CD8-positive, alpha-beta T cell (primary cell): ENCODE measurements at regions of chr11 and their contacts with region 1.

Region 1: GRCh38 chr11:1572197-1573076 is at the start of gene DUSP8:
- DNase-seq: peak; percentile 90 to 98 (median 95)
- ATAC-seq: peak; percentile 58
- H3K4me3 ChIP-seq: peak within 1 kb of the TSS; percentile 51 to 63
- H3K4me3 Mint-ChIP-seq: peak within 1 kb of the TSS; percentile 82
- H3K27ac ChIP-seq: peak within 1 kb of the TSS; percentile 59 to 86
- H3K27ac Mint-ChIP-seq: peak within 1 kb of the TSS; percentile 92
- H3K4me1 ChIP-seq: peaks cover 54% of the 10 kb centered on the region
- H3K4me1 Mint-ChIP-seq: peaks cover 37% of the 10 kb centered on the region
- H3K27me3 ChIP-seq: no peaks in the 10 kb centered on the region
- H3K27me3 Mint-ChIP-seq: no peaks in the 10 kb centered on the region
- CTCF ChIP-seq: no peak
- total RNA-seq, gene DUSP8: 123 to 130 TPM

Region 2: DNA sequence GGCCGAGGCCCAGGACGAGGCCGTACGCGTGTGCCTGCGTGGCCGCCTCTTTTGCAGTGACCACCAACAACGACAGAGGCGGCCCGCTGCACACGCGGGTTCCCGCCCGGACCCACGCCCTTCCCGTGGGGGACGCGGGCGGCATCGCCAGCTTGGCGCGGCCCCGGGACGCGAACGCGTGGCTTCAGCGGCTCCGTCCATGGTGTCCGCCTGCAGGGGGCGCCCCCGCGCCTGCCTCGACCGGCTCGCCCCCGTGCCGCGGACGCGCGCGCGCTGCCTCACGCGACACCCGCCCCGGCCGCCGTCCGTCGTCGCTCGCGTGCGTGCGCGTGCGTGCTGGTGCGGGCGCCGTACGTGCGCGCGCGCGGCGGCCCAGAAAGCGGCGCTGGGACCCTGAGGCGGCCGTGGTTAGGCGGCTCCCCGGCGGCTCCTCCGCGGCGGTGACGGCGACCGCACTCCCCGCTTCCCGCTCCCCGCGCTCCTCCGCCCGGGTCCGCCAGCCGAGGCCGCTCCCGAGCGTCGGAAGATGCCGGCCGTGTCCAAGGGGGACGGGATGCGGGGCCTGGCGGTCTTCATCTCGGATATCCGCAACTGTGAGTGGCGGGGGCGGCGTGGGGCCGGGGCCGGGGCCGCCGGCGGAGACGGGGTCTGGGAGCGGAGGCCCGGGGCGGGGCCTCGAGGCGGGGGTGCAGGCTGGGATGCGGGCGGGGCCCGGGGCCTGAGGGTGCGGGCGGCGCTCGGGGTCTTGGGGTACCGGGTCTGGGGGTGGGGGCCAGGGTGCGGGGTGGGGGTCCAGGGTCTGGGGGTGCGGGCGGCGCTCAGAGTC is 646.7 kb before region 1 on chr11 and contains the start of gene AP2A2:
- CTCF ChIA-PET with region 1: no interaction called
- POLR2A ChIA-PET with region 1: no interaction called
- intact Hi-C with region 1: loop called in 1 of 2 experiments (anchors 5 kb)
- DNase-seq: peak; percentile 76 to 96 (median 92)
- ATAC-seq: peak; percentile 72
- H3K4me3 ChIP-seq: peak within 1 kb of the TSS; percentile 48 to 70
- H3K4me3 Mint-ChIP-seq: peak within 1 kb of the TSS; percentile 82
- H3K27ac ChIP-seq: peak within 1 kb of the TSS; percentile 37 to 67
- H3K27ac Mint-ChIP-seq: peak within 1 kb of the TSS; percentile 88
- H3K4me1 ChIP-seq: peaks cover 41% of the 10 kb centered on the region
- H3K4me1 Mint-ChIP-seq: peaks cover 32% of the 10 kb centered on the region
- H3K27me3 ChIP-seq: no peaks in the 10 kb centered on the region
- H3K27me3 Mint-ChIP-seq: no peaks in the 10 kb centered on the region
- CTCF ChIP-seq: peak; percentile 67
- total RNA-seq, gene AP2A2: 38.6 to 44.3 TPM

Region 3: DNA sequence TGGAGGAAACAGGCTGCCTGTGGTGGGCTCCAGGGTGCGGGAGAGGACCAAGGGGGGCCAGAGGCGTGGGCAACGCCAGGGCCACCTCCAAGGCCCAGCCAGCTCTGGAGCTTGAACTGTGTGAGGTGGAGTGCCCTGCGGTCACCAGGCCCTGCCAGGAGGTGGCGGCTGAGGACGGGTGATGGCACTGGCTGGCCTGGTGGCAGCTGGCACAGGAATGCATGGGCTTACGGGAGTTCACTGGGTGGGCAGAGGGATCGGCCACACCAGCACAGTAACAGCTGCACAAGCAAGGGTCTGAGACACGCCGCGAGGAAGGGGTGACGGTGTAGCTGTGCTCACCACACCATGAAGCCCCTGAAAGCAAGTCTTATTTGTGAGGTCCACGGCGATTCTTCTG is 278.8 kb before region 1 on chr11:
- CTCF ChIA-PET with region 1: no interaction called
- POLR2A ChIA-PET with region 1: no interaction called
- intact Hi-C with region 1: loop called in 1 of 2 experiments (anchors 2 kb)
- DNase-seq: peak in 2 of 9 experiments; percentile 30 to 34
- ATAC-seq: peak; percentile 46
- H3K4me3 ChIP-seq: no peak overlapping the region
- H3K4me3 Mint-ChIP-seq: no peak overlapping the region
- H3K27ac ChIP-seq: no peak overlapping the region
- H3K27ac Mint-ChIP-seq: no peak overlapping the region
- H3K4me1 ChIP-seq: no peaks in the 10 kb centered on the region
- H3K4me1 Mint-ChIP-seq: no peaks in the 10 kb centered on the region
- H3K27me3 ChIP-seq: no peaks in the 10 kb centered on the region
- H3K27me3 Mint-ChIP-seq: no peaks in the 10 kb centered on the region
- CTCF ChIP-seq: no peak

Region 4: DNA sequence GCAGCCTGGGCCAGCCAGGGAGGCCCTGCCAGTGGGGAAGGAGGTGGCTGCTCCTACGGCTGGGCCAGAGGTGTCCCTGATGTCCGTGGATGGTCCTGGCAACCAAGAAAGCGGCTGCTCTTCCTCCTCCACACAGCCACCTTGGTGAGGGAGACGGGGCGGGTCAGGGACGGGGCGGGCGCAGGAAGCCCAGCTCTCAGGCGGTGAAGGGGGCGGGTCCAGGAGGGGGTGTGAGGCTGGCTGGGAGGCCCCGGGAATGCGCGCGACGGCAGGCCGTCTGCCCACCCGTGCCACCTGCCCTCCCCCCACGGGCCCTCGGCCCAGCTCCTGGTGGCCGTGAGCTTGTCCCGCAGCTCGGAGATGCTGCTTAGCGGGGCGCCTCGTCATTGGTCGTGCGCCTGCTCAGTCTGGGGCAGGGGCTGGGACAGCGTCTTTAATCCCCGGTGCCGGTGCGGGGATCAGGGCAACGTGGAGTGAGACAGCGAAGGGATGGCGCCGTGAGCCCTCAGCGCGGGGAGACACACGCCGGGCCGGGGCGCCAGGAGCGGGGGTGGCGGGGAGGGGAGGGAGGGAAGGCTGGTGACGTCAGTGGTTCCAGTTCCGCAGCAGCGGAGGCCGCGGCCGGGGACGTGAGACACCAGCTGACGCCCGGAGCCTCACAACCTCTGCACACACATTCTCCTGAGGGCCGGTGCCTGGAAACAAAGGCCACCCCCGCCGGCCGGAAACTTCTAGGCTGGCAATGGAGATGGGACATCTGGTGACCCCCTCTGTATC is 189.4 kb before region 1 on chr11:
- CTCF ChIA-PET with region 1: interaction called, 3 read pairs
- POLR2A ChIA-PET with region 1: no interaction called
- intact Hi-C with region 1: loop called (anchors 5 kb)
- DNase-seq: peak; percentile 59 to 91 (median 78)
- ATAC-seq: peak; percentile 79
- H3K4me3 ChIP-seq: peak overlapping the region; percentile 67 to 83
- H3K4me3 Mint-ChIP-seq: peak overlapping the region; percentile 75
- H3K27ac ChIP-seq: peak overlapping the region; percentile 70 to 94
- H3K27ac Mint-ChIP-seq: peak overlapping the region; percentile 57
- H3K4me1 ChIP-seq: peaks cover 4% of the 10 kb centered on the region
- H3K4me1 Mint-ChIP-seq: peaks cover 8% of the 10 kb centered on the region
- H3K27me3 ChIP-seq: no peaks in the 10 kb centered on the region
- H3K27me3 Mint-ChIP-seq: no peaks in the 10 kb centered on the region
- CTCF ChIP-seq: no peak

Region 5: DNA sequence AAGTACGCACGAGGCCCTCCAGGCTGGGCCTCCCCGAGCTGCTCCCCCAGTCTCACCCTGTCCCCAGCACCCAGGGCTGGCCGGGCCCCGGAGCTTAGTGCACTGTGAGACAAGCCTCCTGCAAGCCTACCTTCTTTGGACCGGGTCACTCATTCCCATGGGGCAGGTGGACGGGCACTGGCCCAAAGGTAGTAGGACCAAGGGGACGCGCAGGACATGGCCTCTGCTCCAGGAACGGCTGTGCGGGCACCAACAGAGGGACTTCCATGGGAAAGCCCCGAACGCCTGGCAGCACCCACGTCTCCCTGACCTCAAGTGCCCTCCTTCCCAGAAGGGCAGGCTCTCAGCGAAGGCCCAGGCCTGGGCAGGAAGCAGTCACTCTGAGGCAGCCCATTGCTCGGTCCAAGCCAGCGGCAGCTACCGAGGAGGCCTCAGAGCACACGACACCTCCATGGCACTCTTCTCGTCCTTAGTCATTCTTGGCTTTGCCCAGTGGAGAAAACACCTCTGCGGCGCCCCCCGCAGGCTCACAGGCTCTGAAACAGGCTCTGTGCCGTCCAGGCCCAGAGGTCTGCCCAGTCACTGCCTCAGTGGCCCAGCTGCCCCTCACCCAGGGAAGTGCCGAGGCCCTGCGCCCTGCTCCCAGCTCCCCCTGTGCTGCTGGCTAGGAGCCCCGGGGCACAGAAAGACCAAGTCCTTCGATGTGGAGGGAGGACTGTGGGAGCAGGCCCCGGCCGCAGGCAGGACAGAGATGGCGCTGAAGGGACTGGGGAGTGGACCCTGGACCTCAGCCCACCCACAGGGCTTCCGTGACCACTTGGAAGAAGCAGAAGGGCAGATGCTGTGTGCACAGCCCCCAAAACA is 89.6 kb before region 1 on chr11:
- CTCF ChIA-PET with region 1: no interaction called
- POLR2A ChIA-PET with region 1: no interaction called
- intact Hi-C with region 1: no loop called
- DNase-seq: no peak
- ATAC-seq: no peak
- H3K4me3 ChIP-seq: no peak overlapping the region
- H3K4me3 Mint-ChIP-seq: no peak overlapping the region
- H3K27ac ChIP-seq: no peak overlapping the region
- H3K27ac Mint-ChIP-seq: no peak overlapping the region
- H3K4me1 ChIP-seq: peaks cover 23% of the 10 kb centered on the region
- H3K4me1 Mint-ChIP-seq: peaks cover 24% of the 10 kb centered on the region
- H3K27me3 ChIP-seq: no peaks in the 10 kb centered on the region
- H3K27me3 Mint-ChIP-seq: no peaks in the 10 kb centered on the region
- CTCF ChIP-seq: no peak

Region 6: DNA sequence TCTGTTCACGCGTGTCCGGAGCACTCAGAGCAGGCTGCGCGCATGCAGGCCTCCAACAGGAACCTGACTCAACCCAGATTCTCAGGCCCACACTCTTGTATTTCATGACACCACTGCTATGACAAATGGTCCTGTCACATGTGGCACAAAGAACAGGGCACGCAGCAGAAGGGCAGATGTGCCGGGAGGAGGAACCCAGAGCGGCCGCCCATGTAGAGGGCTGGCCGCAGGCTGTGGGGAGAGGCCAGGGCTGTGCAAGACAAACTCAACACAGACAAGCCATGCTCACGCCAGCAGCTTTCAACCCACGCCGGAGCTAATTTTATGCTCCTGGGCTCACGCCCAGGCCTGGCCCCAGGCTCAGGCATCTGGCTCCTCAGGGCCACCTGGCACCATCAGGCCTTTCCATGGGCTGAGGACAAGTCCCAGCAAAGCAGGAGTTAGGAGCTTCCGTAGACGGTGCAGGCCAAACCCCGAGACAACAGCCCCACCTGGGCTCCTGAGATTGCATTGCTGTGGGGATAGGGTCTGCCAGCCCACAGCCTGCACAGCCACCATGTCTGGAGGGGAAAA is 40.3 kb before region 1 on chr11:
- CTCF ChIA-PET with region 1: interaction called, 11 read pairs
- POLR2A ChIA-PET with region 1: no interaction called
- intact Hi-C with region 1: loop called in 1 of 2 experiments (anchors 5 kb)
- DNase-seq: no peak
- ATAC-seq: no peak
- H3K4me3 ChIP-seq: no peak overlapping the region
- H3K4me3 Mint-ChIP-seq: no peak overlapping the region
- H3K27ac ChIP-seq: no peak overlapping the region
- H3K27ac Mint-ChIP-seq: no peak overlapping the region
- H3K4me1 ChIP-seq: peaks cover 14% of the 10 kb centered on the region
- H3K4me1 Mint-ChIP-seq: peaks cover 51% of the 10 kb centered on the region
- H3K27me3 ChIP-seq: no peaks in the 10 kb centered on the region
- H3K27me3 Mint-ChIP-seq: no peaks in the 10 kb centered on the region
- CTCF ChIP-seq: no peak

Region 7: DNA sequence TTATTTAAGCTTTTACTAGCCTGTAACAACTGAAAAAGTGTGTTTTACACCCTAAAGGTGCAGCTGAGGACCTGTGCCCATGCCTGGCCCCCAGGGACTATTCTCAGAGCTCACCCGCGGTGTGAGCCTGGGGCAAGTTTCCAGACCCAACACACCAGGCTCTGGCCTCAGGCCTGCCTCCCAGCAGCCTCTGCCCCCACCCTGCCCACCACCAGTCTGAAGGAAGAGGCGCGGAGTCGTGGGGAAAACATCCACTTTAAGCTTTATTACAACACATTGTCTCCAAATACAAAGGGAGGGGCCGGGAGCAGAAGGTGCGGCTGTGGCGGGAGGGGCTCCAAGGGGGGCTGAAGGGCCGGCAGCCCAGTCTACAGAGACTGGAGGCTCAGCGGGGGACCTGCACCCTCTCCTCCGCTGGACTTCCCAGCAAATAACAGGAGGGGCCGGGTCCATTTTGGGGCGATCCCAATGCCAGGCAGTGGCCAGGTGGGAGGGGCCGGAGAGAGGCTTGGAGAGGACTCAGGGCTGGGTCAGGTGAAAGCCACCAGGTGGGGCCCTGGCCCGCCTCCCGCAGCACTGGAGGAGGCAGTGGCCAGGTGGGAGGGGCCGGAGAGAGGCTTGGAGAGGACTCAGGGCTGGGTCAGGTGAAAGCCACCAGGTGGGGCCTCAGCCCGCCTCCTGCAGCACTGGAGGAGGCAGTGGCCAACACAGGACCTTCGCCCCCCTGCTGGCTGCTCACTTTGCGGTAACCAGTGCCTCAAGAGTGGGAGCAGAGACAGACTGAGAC is 18.4 kb before region 1 on chr11:
- CTCF ChIA-PET with region 1: interaction called, 170 read pairs
- POLR2A ChIA-PET with region 1: interaction called, 4 read pairs
- intact Hi-C with region 1: no loop called
- DNase-seq: peak in 2 of 9 experiments; percentile 6 to 23
- ATAC-seq: no peak
- H3K4me3 ChIP-seq: no peak overlapping the region
- H3K4me3 Mint-ChIP-seq: no peak overlapping the region
- H3K27ac ChIP-seq: no peak overlapping the region
- H3K27ac Mint-ChIP-seq: no peak overlapping the region
- H3K4me1 ChIP-seq: no peaks in the 10 kb centered on the region
- H3K4me1 Mint-ChIP-seq: no peaks in the 10 kb centered on the region
- H3K27me3 ChIP-seq: peaks cover 0 to 2% of the 10 kb centered on the region in 2 experiments
- H3K27me3 Mint-ChIP-seq: peaks cover 22% of the 10 kb centered on the region
- CTCF ChIP-seq: no peak

Region 8: GRCh38 chr11:1628506-1629325 is 56.3 kb after region 1 on chr11:
- CTCF ChIA-PET with region 1: interaction called, 13 read pairs
- POLR2A ChIA-PET with region 1: no interaction called
- intact Hi-C with region 1: no loop called
- DNase-seq: peak; percentile 27 to 75 (median 62)
- ATAC-seq: peak; percentile 93
- H3K4me3 ChIP-seq: no peak overlapping the region
- H3K4me3 Mint-ChIP-seq: no peak overlapping the region
- H3K27ac ChIP-seq: no peak overlapping the region
- H3K27ac Mint-ChIP-seq: no peak overlapping the region
- H3K4me1 ChIP-seq: peaks cover 12% of the 10 kb centered on the region
- H3K4me1 Mint-ChIP-seq: peaks cover 6% of the 10 kb centered on the region
- H3K27me3 ChIP-seq: peaks cover 6 to 10% of the 10 kb centered on the region in 2 experiments
- H3K27me3 Mint-ChIP-seq: peaks cover 30% of the 10 kb centered on the region
- CTCF ChIP-seq: peak; percentile 89